PC-3 (cell line): ENCODE measurements at regions of chr3 and their contacts with region 1.

Region 1: GRCh38 chr3:44323341-44323955 is 15.1 kb upstream of the TCAIM start:
- DNase-seq: peak; percentile 80
- ATAC-seq: peak; percentile 56
- H3K4me3 ChIP-seq: no peak overlapping the region
- H3K27ac ChIP-seq: no peak overlapping the region
- H3K4me1 ChIP-seq: peaks cover 15% of the 10 kb centered on the region
- H3K27me3 ChIP-seq: no peaks in the 10 kb centered on the region
- CTCF ChIP-seq: peak; percentile 91

Region 2: GRCh38 chr3:44272191-44272590 is 51.3 kb before region 1 on chr3:
- CTCF ChIA-PET with region 1: no interaction called
- POLR2A ChIA-PET with region 1: no interaction called
- intact Hi-C with region 1: no loop called
- DNase-seq: no peak
- ATAC-seq: no peak
- H3K4me3 ChIP-seq: no peak overlapping the region
- H3K27ac ChIP-seq: no peak overlapping the region
- H3K4me1 ChIP-seq: no peaks in the 10 kb centered on the region
- H3K27me3 ChIP-seq: no peaks in the 10 kb centered on the region
- CTCF ChIP-seq: no peak

Region 3: GRCh38 chr3:44338010-44338827 is 14.8 kb after region 1 on chr3 and contains the start of gene TCAIM:
- CTCF ChIA-PET with region 1: no interaction called
- POLR2A ChIA-PET with region 1: no interaction called
- intact Hi-C with region 1: loop called (anchors 1 kb)
- DNase-seq: peak; percentile 98
- ATAC-seq: peak; percentile 91
- H3K4me3 ChIP-seq: peak within 1 kb of the TSS; percentile 79
- H3K27ac ChIP-seq: peak within 1 kb of the TSS; percentile 82
- H3K4me1 ChIP-seq: peaks cover 17% of the 10 kb centered on the region
- H3K27me3 ChIP-seq: no peaks in the 10 kb centered on the region
- CTCF ChIP-seq: no peak
- total RNA-seq, gene TCAIM: 19.1 and 20.2 TPM in 2 replicates

Region 4: GRCh38 chr3:44510000-44510368 is 186.5 kb after region 1 on chr3:
- CTCF ChIA-PET with region 1: no interaction called
- POLR2A ChIA-PET with region 1: no interaction called
- intact Hi-C with region 1: loop called (anchors 1 kb)
- DNase-seq: peak; percentile 17
- ATAC-seq: peak; percentile 44
- H3K4me3 ChIP-seq: peak overlapping the region; percentile 81
- H3K27ac ChIP-seq: no peak overlapping the region
- H3K4me1 ChIP-seq: peaks cover 15% of the 10 kb centered on the region
- H3K27me3 ChIP-seq: no peaks in the 10 kb centered on the region
- CTCF ChIP-seq: no peak

Region 5: DNA sequence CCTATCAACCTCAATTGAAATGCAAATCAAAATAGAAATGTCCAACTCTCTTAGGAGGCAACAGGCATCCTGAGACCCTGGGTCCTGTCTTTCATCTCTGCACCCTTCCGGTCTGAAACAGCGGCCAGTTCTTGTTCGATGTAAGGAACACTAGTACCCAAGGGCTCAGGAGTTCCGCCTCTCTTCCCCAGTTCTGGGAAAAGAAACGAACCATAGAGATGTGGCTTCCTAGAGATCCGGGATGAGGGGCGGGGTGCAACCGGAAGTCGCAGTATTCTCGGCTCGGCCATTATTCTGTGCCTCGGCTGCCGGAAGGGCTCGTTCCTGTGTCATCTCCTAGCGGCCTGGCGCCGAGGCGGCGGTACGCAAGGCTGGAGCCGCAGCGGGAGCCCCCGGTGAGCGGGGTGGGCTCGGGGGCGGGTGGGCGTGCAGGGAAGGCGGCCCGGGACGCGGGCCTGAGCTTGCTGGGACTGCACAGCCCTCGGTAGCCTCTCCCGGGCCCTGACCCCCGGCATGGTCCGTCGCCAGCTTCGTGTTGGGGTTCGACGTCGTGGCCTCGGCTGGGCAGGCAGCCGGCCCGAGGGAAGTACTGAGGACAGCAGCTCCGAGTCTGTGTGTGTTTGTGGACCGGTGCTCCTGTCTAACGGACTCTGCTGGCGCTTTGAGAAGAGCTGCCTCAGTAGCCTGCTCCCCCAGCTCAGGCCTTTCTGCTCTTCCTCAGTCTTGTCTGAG is 301.5 kb after region 1 on chr3 and contains the start of gene ZNF197:
- CTCF ChIA-PET with region 1: no interaction called
- POLR2A ChIA-PET with region 1: no interaction called
- intact Hi-C with region 1: loop called (anchors 1 kb)
- DNase-seq: peak; percentile 91
- ATAC-seq: peak; percentile 96
- H3K4me3 ChIP-seq: peak within 1 kb of the TSS; percentile 92
- H3K27ac ChIP-seq: peak within 1 kb of the TSS; percentile 25
- H3K4me1 ChIP-seq: peaks cover 13% of the 10 kb centered on the region
- H3K27me3 ChIP-seq: no peaks in the 10 kb centered on the region
- CTCF ChIP-seq: no peak
- total RNA-seq, gene ZNF197: 9.6 and 10.4 TPM in 2 replicates

Region 6: GRCh38 chr3:44913868-44914468 is 590.5 kb after region 1 on chr3:
- CTCF ChIA-PET with region 1: interaction called, 3 read pairs
- POLR2A ChIA-PET with region 1: no interaction called
- intact Hi-C with region 1: loop called (anchors 2 kb)
- DNase-seq: peak; percentile 87
- ATAC-seq: peak; percentile 72
- H3K4me3 ChIP-seq: no peak overlapping the region
- H3K27ac ChIP-seq: no peak overlapping the region
- H3K4me1 ChIP-seq: no peaks in the 10 kb centered on the region
- H3K27me3 ChIP-seq: no peaks in the 10 kb centered on the region
- CTCF ChIP-seq: peak; percentile 93